Posterior cingulate gyrus (tissue), 11 donors: ENCODE measurements at regions of chr7 and their contacts with region 1.

Region 1: GRCh38 chr7:80060218-80060806 is 74.3 kb upstream of the GNAI1 start:
- DNase-seq: no peak

Region 2: GRCh38 chr7:80453699-80454340 is 393.5 kb after region 1 on chr7:
- intact Hi-C with region 1: loop called (anchors 1 kb)
- DNase-seq: no peak